Tibial artery (tissue), 4 donors: ENCODE measurements at regions of chr14 and their contacts with region 1.

Region 1: GRCh38 chr14:99683619-99684355 is at the start of gene CYP46A1:
- DNase-seq: peak; percentile 100
- H3K4me3 ChIP-seq: peak within 1 kb of the TSS; percentile 84 to 91
- H3K27ac ChIP-seq: peak within 1 kb of the TSS; percentile 90 to 94
- H3K4me1 ChIP-seq: peaks cover 0 to 18% (median 12%) of the 10 kb centered on the region in 4 donors
- H3K27me3 ChIP-seq: peaks cover 0 to 4% of the 10 kb centered on the region in 2 donors
- CTCF ChIP-seq: peak in 1 of 2 experiments; percentile 12

Region 2: GRCh38 chr14:99604283-99604765 is 79.5 kb before region 1 on chr14:
- intact Hi-C with region 1: loop called (anchors 2 kb)
- DNase-seq: peak; percentile 90 to 97
- H3K4me3 ChIP-seq: peak overlapping the region; percentile 86 to 90
- H3K27ac ChIP-seq: peak overlapping the region; percentile 77 to 94
- H3K4me1 ChIP-seq: peaks cover 0 to 35% (median 19%) of the 10 kb centered on the region in 4 donors
- H3K27me3 ChIP-seq: no peaks in the 10 kb centered on the region
- CTCF ChIP-seq: no peak

Region 3: GRCh38 chr14:99644723-99645550 is 38.9 kb before region 1 on chr14 and contains the start of gene HHIPL1:
- intact Hi-C with region 1: no loop called
- DNase-seq: no peak
- H3K4me3 ChIP-seq: peak within 1 kb of the TSS; percentile 45 to 59
- H3K27ac ChIP-seq: peak within 1 kb of the TSS in 1 of 2 donors; percentile 33
- H3K4me1 ChIP-seq: peaks cover 0 to 19% (median 10%) of the 10 kb centered on the region in 4 donors
- H3K27me3 ChIP-seq: peaks cover 0 to 35% of the 10 kb centered on the region in 2 donors
- CTCF ChIP-seq: no peak

Region 4: GRCh38 chr14:99755629-99756603 is 72.1 kb after region 1 on chr14:
- intact Hi-C with region 1: no loop called
- DNase-seq: peak; percentile 92 to 95
- H3K4me3 ChIP-seq: no peak overlapping the region
- H3K27ac ChIP-seq: peak overlapping the region; percentile 51 to 62
- H3K4me1 ChIP-seq: peaks cover 0 to 59% (median 28%) of the 10 kb centered on the region in 4 donors
- H3K27me3 ChIP-seq: no peaks in the 10 kb centered on the region
- CTCF ChIP-seq: no peak

Region 5: DNA sequence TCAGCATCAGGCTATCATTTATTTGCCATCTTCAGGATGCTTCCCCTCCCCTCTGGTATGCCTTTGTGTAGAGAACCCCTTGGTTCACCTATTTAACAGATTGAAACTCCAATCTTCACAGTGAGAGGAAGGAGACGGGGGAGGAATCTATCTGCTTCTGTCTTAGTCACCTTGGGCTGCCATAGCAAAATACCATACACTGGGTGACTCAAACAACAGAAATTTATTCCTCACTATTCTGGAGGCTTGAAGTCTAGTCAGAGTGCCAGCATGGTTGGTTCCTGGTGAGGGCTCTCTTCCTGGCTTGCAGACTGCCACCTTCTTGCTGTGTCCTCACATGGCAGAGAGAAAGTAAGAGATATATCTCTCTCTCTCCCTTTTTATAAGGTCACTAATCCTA is 96.0 kb after region 1 on chr14:
- intact Hi-C with region 1: loop called (anchors 10 kb)
- DNase-seq: no peak
- H3K4me3 ChIP-seq: no peak overlapping the region
- H3K27ac ChIP-seq: no peak overlapping the region
- H3K4me1 ChIP-seq: peaks cover 0 to 4% (median 0%) of the 10 kb centered on the region in 4 donors
- H3K27me3 ChIP-seq: no peaks in the 10 kb centered on the region
- CTCF ChIP-seq: no peak

Region 6: GRCh38 chr14:99884834-99885648 is 201.3 kb after region 1 on chr14:
- intact Hi-C with region 1: loop called (anchors 5 kb)
- DNase-seq: no peak
- H3K4me3 ChIP-seq: no peak overlapping the region
- H3K27ac ChIP-seq: no peak overlapping the region
- H3K4me1 ChIP-seq: peaks cover 0 to 7% (median 4%) of the 10 kb centered on the region in 4 donors
- H3K27me3 ChIP-seq: no peaks in the 10 kb centered on the region
- CTCF ChIP-seq: peak; percentile 76 to 79

Region 7: GRCh38 chr14:100213956-100214774 is 530.4 kb after region 1 on chr14:
- intact Hi-C with region 1: loop called (anchors 10 kb)
- DNase-seq: peak; percentile 82 to 92
- H3K4me3 ChIP-seq: peak overlapping the region; percentile 98 to 100
- H3K27ac ChIP-seq: peak overlapping the region; percentile 99
- H3K4me1 ChIP-seq: peaks cover 0 to 13% (median 7%) of the 10 kb centered on the region in 4 donors
- H3K27me3 ChIP-seq: no peaks in the 10 kb centered on the region
- CTCF ChIP-seq: no peak

Region 8: GRCh38 chr14:100554082-100554677 is 870.4 kb after region 1 on chr14:
- intact Hi-C with region 1: loop called (anchors 5 kb)
- DNase-seq: no peak
- H3K4me3 ChIP-seq: no peak overlapping the region
- H3K27ac ChIP-seq: no peak overlapping the region
- H3K4me1 ChIP-seq: peaks cover 0 to 3% (median 0%) of the 10 kb centered on the region in 4 donors
- H3K27me3 ChIP-seq: peaks cover 0 to 20% of the 10 kb centered on the region in 2 donors
- CTCF ChIP-seq: no peak